Transverse colon (tissue), 4 donors: ENCODE measurements at regions of chr11 and their contacts with region 1.

Region 1: DNA sequence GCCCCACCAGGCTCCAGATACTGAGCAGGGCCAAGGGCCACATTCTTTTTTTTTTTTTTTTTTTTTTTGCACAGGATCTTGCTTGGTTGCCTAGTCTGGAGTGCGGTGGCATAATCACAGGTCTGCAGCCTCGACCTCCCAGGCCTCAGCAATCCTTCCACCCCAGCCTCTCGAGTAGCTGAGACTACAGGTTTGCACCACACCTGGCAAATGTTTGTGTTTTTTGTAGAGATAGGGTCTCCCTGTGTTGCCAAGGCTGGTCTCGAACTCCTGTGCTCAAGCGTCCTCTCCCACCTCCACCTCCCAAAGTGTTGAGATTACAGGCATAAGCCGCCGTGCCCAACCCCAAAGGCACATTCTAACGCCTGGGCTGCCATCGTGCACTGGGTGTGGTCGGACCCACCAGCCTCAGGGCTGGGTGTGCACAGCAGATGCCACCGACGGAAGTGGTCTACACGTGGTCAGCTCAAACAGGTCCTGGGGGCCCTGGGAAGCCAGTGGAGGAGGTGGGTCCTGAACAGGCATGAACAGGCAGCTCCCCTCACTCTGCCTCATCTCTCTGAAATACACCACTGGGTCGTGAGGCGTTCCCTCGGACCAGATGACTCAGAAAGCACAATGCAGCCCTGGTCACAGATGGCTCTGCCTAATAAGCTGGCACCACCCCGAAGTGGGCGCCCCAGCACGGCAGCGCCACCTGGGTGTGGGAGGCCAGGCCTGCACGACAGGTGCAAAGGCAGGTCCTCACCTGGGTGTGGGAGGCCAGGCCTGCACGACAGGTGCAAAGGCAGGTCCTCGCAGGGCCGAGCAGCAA is 5.1 kb upstream of the B4GALNT4 start:
- DNase-seq: peak; percentile 88
- H3K4me3 ChIP-seq: no peak overlapping the region
- H3K27ac ChIP-seq: no peak overlapping the region
- H3K4me1 ChIP-seq: peaks cover 0 to 10% (median 8%) of the 10 kb centered on the region in 4 donors
- H3K27me3 ChIP-seq: peaks cover 35% of the 10 kb centered on the region
- CTCF ChIP-seq: peak; percentile 28 to 67 (median 45)
- EP300 ChIP-seq: no peak
- POLR2A ChIP-seq: no peak

Region 2: GRCh38 chr11:250740-251299 is 113.3 kb before region 1 on chr11:
- in situ Hi-C with region 1: loop called in 1 of 4 experiments (anchors 10 kb)
- intact Hi-C with region 1: no loop called
- DNase-seq: peak; percentile 70
- H3K4me3 ChIP-seq: no peak overlapping the region
- H3K27ac ChIP-seq: no peak overlapping the region
- H3K4me1 ChIP-seq: no peaks in the 10 kb centered on the region
- H3K27me3 ChIP-seq: no peaks in the 10 kb centered on the region
- CTCF ChIP-seq: peak; percentile 54 to 66 (median 63)
- EP300 ChIP-seq: no peak
- POLR2A ChIP-seq: no peak

Region 3: DNA sequence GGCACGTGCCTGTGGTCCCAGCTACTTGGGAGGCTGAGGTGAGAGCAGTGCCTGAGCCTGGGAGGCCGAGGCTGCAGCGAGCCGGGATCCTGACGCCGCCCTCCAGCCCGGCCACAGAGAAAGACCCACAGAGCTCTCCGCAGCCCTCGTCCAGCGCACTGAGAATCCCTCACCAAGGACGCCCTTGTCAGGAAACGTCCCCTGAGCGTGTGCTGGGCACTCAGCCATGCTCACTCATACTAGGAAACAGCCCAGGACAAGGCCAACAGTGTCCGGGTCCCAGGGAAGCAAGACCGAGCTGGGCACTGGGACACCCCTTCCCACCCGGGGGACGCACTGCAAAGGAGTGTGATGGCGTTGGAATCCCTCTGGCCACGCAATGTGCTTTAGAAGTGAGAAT is 316.3 kb after region 1 on chr11:
- in situ Hi-C with region 1: no loop called
- intact Hi-C with region 1: no loop called
- DNase-seq: no peak
- H3K4me3 ChIP-seq: no peak overlapping the region
- H3K27ac ChIP-seq: no peak overlapping the region
- H3K4me1 ChIP-seq: no peaks in the 10 kb centered on the region
- H3K27me3 ChIP-seq: no peaks in the 10 kb centered on the region
- CTCF ChIP-seq: no peak
- EP300 ChIP-seq: no peak
- POLR2A ChIP-seq: no peak